CD14-positive monocyte (primary cell): ENCODE measurements at regions of chr13 and their contacts with region 1.

Region 1: DNA sequence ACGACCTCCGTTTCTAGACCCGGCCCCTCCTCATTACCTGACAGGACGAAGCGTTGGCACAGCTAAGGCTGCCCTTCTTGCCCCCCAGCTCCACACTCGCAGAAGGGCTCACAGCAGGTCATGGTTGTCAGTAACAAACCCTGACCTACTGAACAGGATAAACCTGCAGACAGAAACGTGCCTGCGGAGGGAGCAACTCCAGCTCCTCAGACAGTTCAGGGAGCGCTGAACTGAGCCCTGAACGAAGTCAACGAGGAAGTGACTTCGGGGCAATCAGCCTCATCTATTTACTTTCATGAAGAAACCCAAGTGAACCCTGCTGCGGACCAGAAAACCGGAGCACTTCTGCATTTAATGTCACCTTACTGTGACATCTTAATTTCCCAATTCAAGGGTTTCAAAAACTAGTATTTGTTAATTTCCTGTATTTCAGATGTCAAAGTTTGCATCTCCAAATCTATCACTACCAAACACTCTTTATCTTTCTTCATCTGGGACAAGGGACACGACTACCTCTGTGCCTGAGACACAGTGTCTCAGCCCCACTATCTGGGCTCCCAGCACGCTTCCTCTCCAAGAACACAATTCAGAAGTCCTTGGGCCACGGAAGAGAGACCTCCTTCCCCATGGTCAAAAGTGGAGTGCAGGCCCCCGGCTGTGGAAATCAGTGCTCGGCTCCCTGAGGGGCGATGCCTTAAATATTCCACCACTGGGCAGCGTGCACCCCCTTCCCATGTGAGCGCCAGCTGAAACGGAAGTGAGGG is 40.2 kb downstream of the CARS2 start:
- DNase-seq: peak; percentile 83 to 89 (median 85)
- H3K4me3 ChIP-seq: peak overlapping the region; percentile 19 to 66 (median 26)
- H3K4me3 Mint-ChIP-seq: peak overlapping the region; percentile 76 to 90
- H3K27ac ChIP-seq: peak overlapping the region; percentile 91 to 98
- H3K27ac Mint-ChIP-seq: peak overlapping the region; percentile 97 to 99 (median 98)
- H3K4me1 ChIP-seq: peaks cover 70 to 72% of the 10 kb centered on the region in 2 donors
- H3K4me1 Mint-ChIP-seq: peaks cover 69% of the 10 kb centered on the region
- H3K27me3 ChIP-seq: no peaks in the 10 kb centered on the region
- H3K27me3 Mint-ChIP-seq: peaks cover 0 to 4% (median 0%) of the 10 kb centered on the region in 3 donors
- CTCF ChIP-seq: no peak

Region 2: GRCh38 chr13:110593430-110594130 is 72.1 kb before region 1 on chr13:
- intact Hi-C with region 1: no loop called
- DNase-seq: peak; percentile 48 to 64 (median 63)
- H3K4me3 ChIP-seq: no peak overlapping the region
- H3K4me3 Mint-ChIP-seq: no peak overlapping the region
- H3K27ac ChIP-seq: no peak overlapping the region
- H3K27ac Mint-ChIP-seq: peak overlapping the region in 1 of 7 donors; percentile 66
- H3K4me1 ChIP-seq: no peaks in the 10 kb centered on the region
- H3K4me1 Mint-ChIP-seq: no peaks in the 10 kb centered on the region
- H3K27me3 ChIP-seq: no peaks in the 10 kb centered on the region
- H3K27me3 Mint-ChIP-seq: peaks cover 0 to 3% (median 2%) of the 10 kb centered on the region in 3 donors
- CTCF ChIP-seq: peak; percentile 76

Region 3: GRCh38 chr13:110698689-110699088 is 33.0 kb after region 1 on chr13:
- intact Hi-C with region 1: loop called (anchors 5 kb)
- DNase-seq: no peak
- H3K4me3 ChIP-seq: peak overlapping the region in 1 of 3 experiments; percentile 44
- H3K4me3 Mint-ChIP-seq: no peak overlapping the region
- H3K27ac ChIP-seq: peak overlapping the region; percentile 91
- H3K27ac Mint-ChIP-seq: peak overlapping the region; percentile 84 to 96 (median 94)
- H3K4me1 ChIP-seq: peaks cover 51 to 61% of the 10 kb centered on the region in 2 donors
- H3K4me1 Mint-ChIP-seq: peaks cover 55% of the 10 kb centered on the region
- H3K27me3 ChIP-seq: no peaks in the 10 kb centered on the region
- H3K27me3 Mint-ChIP-seq: no peaks in the 10 kb centered on the region
- CTCF ChIP-seq: no peak

Region 4: GRCh38 chr13:110705826-110706569 is 40.3 kb after region 1 on chr13 and contains the start of gene CARS2:
- intact Hi-C with region 1: loop called in 1 of 2 experiments (anchors 5 kb)
- DNase-seq: peak; percentile 93 to 97 (median 96)
- H3K4me3 ChIP-seq: peak within 1 kb of the TSS; percentile 51 to 87 (median 54)
- H3K4me3 Mint-ChIP-seq: peak within 1 kb of the TSS; percentile 81 to 91
- H3K27ac ChIP-seq: peak within 1 kb of the TSS; percentile 54 to 72
- H3K27ac Mint-ChIP-seq: peak within 1 kb of the TSS; percentile 60 to 92 (median 86)
- H3K4me1 ChIP-seq: peaks cover 50 to 60% of the 10 kb centered on the region in 2 donors
- H3K4me1 Mint-ChIP-seq: peaks cover 51% of the 10 kb centered on the region
- H3K27me3 ChIP-seq: no peaks in the 10 kb centered on the region
- H3K27me3 Mint-ChIP-seq: no peaks in the 10 kb centered on the region
- CTCF ChIP-seq: no peak
- polyA plus RNA-seq, gene CARS2: 130 to 305 (median 227) TPM